Transverse colon (tissue), 4 donors: ENCODE measurements at regions of chr12 and their contacts with region 1.

Region 1: GRCh38 chr12:106282457-106283097 is 20.0 kb upstream of the TCP11L2 start:
- DNase-seq: peak; percentile 57
- H3K4me3 ChIP-seq: no peak overlapping the region
- H3K27ac ChIP-seq: peak overlapping the region in 1 of 4 donors; percentile 49
- H3K4me1 ChIP-seq: peaks cover 0 to 14% (median 2%) of the 10 kb centered on the region in 4 donors
- H3K27me3 ChIP-seq: no peaks in the 10 kb centered on the region
- CTCF ChIP-seq: peak; percentile 70 to 90 (median 72)
- EP300 ChIP-seq: no peak
- POLR2A ChIP-seq: no peak

Region 2: DNA sequence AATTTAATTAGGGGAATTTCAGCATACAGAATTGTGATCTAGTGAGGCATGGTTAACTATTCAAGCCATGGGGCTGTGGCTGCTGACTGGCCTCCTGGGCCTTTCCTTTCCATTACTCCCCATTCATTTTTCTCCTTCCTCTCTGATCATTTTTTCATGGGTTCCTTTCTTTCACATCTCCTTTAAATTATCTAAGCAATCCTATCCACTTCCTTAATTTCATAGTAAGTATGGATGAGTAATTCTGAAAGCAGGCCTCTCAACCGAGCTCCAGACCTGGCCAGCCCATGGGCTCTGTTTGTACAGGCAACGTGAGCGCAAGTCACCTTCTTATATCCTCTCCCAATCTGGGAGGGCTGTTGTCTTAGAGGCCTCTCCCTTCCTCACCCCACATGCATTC is 48.1 kb before region 1 on chr12:
- in situ Hi-C with region 1: loop called in 3 of 4 experiments (anchors 5 kb)
- intact Hi-C with region 1: no loop called
- DNase-seq: no peak
- H3K4me3 ChIP-seq: no peak overlapping the region
- H3K27ac ChIP-seq: no peak overlapping the region
- H3K4me1 ChIP-seq: peaks cover 0 to 2% (median 0%) of the 10 kb centered on the region in 4 donors
- H3K27me3 ChIP-seq: no peaks in the 10 kb centered on the region
- CTCF ChIP-seq: no peak
- EP300 ChIP-seq: no peak
- POLR2A ChIP-seq: no peak

Region 3: DNA sequence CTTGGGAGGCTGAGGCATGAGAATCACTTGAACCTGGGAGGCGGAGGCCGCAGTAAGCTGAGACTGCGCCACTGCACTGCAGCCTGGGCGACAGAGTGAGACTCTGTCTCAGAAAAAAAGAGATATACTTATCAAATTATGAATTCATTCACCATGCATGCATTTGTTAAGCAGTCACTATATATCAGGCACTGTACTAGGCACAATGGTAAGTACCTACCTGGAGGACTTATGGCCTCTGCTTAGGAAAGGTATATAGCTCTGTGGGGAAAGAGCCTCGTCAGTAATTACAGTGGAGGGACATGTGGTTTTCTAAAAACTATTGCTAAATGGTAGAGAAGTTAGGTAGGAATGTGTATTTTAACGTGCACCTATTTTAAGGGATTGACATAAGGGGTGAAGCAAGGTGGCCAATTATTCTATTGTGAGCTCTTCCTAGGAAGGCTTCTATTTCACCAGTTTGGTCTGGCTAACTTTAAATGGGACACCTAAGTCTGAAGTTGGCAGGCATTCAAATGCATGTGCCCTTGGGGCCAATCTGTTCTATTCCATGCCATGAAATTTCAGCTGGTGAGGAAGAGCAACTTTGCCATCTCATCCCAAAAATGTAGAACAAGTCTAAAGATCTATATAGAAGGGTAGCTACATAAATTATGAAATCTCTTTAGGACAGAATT is 35.0 kb after region 1 on chr12:
- in situ Hi-C with region 1: no loop called
- intact Hi-C with region 1: loop called (anchors 2 kb)
- DNase-seq: no peak
- H3K4me3 ChIP-seq: no peak overlapping the region
- H3K27ac ChIP-seq: no peak overlapping the region
- H3K4me1 ChIP-seq: peaks cover 0 to 5% (median 0%) of the 10 kb centered on the region in 4 donors
- H3K27me3 ChIP-seq: no peaks in the 10 kb centered on the region
- CTCF ChIP-seq: no peak
- EP300 ChIP-seq: no peak
- POLR2A ChIP-seq: no peak